ENCODE measurements at regions of chr18 and their contacts with region 1.

Region 1: DNA sequence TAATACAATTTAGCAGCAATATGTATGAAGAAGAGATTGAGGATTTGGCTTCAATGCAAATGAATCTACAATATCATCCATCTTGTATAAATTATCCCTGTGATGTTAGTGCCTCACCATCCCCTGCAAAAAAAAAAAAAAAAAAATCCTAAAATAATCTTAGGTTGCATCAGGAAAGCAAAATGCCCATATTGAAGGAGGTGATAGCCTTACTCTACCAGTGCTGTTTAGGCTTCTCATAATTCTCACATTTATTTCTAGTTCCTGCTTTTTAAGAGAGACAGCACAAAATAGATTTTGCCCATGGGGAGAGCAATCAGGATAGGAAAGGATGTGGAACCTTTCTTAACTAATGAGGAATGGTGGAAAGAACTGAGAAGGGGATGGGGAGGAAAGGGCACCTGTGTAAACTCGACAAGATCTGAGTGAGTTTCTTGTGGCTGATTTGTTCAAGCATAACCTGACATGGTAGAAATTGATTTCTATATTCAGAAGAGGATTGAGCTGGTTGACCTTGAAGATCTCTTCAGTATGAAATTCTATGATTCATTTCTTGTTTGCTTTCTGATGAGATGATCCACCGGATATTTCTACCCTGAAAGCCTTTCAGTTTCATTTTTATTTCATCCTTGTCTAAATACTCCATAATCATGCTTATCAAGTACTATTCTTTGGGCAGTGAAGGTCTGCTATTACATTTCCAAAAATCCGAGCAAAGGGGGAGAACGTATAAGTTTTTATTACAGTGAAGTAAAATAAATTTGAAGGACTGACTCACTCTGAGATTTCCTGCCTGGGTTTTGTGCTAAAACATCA is 391.2 kb downstream of the PTPRM start:
- DNase-seq: no peak
- ATAC-seq: no peak
- H3K4me3 ChIP-seq: peak overlapping the region; percentile 19
- H3K27ac ChIP-seq: no peak overlapping the region
- H3K4me1 ChIP-seq: peaks cover 4% of the 10 kb centered on the region
- H3K27me3 ChIP-seq: no peaks in the 10 kb centered on the region

Region 2: GRCh38 chr18:7902399-7902839 is 55.9 kb before region 1 on chr18:
- intact Hi-C with region 1: loop called in 1 of 4 experiments (anchors 10 kb)
- DNase-seq: peak in 1 of 3 donors; percentile 44
- ATAC-seq: peak; percentile 85 to 90
- H3K4me3 ChIP-seq: no peak overlapping the region
- H3K27ac ChIP-seq: no peak overlapping the region
- H3K4me1 ChIP-seq: peaks cover 6% of the 10 kb centered on the region
- H3K27me3 ChIP-seq: no peaks in the 10 kb centered on the region

Region 3: DNA sequence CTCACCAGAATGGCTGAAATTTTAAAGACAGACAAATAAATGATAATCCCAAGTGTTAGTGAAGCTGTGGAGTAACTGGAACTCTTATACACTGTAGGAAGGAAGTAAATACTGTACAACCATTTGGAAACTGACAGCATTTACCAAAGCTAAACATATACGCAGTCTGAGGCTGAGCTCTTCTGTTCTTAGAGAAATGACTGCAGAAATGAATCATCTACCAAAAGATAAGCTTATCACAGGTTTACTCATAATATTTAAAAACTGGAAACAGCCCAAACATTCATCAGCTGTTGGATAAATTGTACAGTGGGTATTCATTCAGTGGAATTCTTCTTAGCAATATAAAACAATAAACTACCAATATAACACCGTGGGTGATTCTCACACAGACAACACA is 432.8 kb after region 1 on chr18:
- intact Hi-C with region 1: no loop called
- DNase-seq: no peak
- ATAC-seq: no peak
- H3K4me3 ChIP-seq: no peak overlapping the region
- H3K27ac ChIP-seq: no peak overlapping the region
- H3K4me1 ChIP-seq: no peaks in the 10 kb centered on the region
- H3K27me3 ChIP-seq: no peaks in the 10 kb centered on the region

Measured in right cardiac atrium (tissue), 5 donors.